Transverse colon (tissue), 4 donors: ENCODE measurements at regions of chr14 and their contacts with region 1.

Region 1: GRCh38 chr14:29955087-29955486 is 27.4 kb upstream of the PRKD1 start:
- DNase-seq: no peak
- H3K4me3 ChIP-seq: no peak overlapping the region
- H3K27ac ChIP-seq: no peak overlapping the region
- H3K4me1 ChIP-seq: no peaks in the 10 kb centered on the region
- H3K27me3 ChIP-seq: no peaks in the 10 kb centered on the region
- CTCF ChIP-seq: no peak
- EP300 ChIP-seq: no peak
- POLR2A ChIP-seq: no peak

Region 2: DNA sequence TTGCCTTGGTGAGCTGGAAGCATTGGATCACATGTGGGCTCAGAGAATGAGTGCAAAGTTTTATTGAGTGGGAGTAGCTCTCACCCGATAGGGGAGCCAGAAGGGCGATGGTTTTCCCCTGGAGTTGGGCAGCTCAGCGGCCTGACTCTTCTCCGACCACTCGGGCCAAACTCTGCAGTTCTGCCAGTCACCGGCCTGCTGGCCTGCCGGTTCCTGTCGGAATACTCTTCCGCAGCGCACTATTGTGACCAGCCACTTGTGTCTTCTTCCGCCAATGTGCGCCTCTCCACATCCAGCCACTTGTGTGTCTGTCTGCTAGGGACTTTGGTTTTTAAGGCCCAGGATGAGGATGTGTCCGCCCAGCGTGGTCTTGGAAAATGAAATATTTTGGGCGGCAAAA is 16.0 kb after region 1 on chr14:
- in situ Hi-C with region 1: no loop called
- intact Hi-C with region 1: loop called (anchors 2 kb)
- DNase-seq: no peak
- H3K4me3 ChIP-seq: no peak overlapping the region
- H3K27ac ChIP-seq: no peak overlapping the region
- H3K4me1 ChIP-seq: no peaks in the 10 kb centered on the region
- H3K27me3 ChIP-seq: no peaks in the 10 kb centered on the region
- CTCF ChIP-seq: no peak
- EP300 ChIP-seq: no peak
- POLR2A ChIP-seq: no peak

Region 3: GRCh38 chr14:30869551-30870155 is 914.6 kb after region 1 on chr14:
- in situ Hi-C with region 1: no loop called
- intact Hi-C with region 1: loop called (anchors 10 kb)
- DNase-seq: no peak
- H3K4me3 ChIP-seq: no peak overlapping the region
- H3K27ac ChIP-seq: no peak overlapping the region
- H3K4me1 ChIP-seq: peaks cover 0 to 10% (median 8%) of the 10 kb centered on the region in 4 donors
- H3K27me3 ChIP-seq: peaks cover 38% of the 10 kb centered on the region
- CTCF ChIP-seq: no peak
- EP300 ChIP-seq: no peak
- POLR2A ChIP-seq: no peak